ENCODE measurements at regions of chrX and their contacts with region 1.

Region 1: GRCh38 chrX:20252381-20253231 is 14.1 kb downstream of the RPS6KA3 start:
- DNase-seq: peak; percentile 46 to 84 (median 71)
- ATAC-seq: peak; percentile 77
- H3K4me3 ChIP-seq: no peak overlapping the region
- H3K4me3 Mint-ChIP-seq: no peak overlapping the region
- H3K27ac ChIP-seq: peak overlapping the region in 1 of 2 experiments; percentile 49
- H3K27ac Mint-ChIP-seq: peak overlapping the region; percentile 78
- H3K4me1 ChIP-seq: peaks cover 30% of the 10 kb centered on the region
- H3K4me1 Mint-ChIP-seq: peaks cover 61% of the 10 kb centered on the region
- H3K27me3 ChIP-seq: no peaks in the 10 kb centered on the region
- H3K27me3 Mint-ChIP-seq: no peaks in the 10 kb centered on the region
- CTCF ChIP-seq: peak; percentile 49

Region 2: GRCh38 chrX:19075754-19076153 is 1176.9 kb before region 1 on chrX:
- CTCF ChIA-PET with region 1: no interaction called
- POLR2A ChIA-PET with region 1: no interaction called
- intact Hi-C with region 1: no loop called
- DNase-seq: no peak
- ATAC-seq: no peak
- H3K4me3 ChIP-seq: no peak overlapping the region
- H3K4me3 Mint-ChIP-seq: no peak overlapping the region
- H3K27ac ChIP-seq: no peak overlapping the region
- H3K27ac Mint-ChIP-seq: no peak overlapping the region
- H3K4me1 ChIP-seq: no peaks in the 10 kb centered on the region
- H3K4me1 Mint-ChIP-seq: no peaks in the 10 kb centered on the region
- H3K27me3 ChIP-seq: no peaks in the 10 kb centered on the region
- H3K27me3 Mint-ChIP-seq: no peaks in the 10 kb centered on the region
- CTCF ChIP-seq: no peak

Region 3: DNA sequence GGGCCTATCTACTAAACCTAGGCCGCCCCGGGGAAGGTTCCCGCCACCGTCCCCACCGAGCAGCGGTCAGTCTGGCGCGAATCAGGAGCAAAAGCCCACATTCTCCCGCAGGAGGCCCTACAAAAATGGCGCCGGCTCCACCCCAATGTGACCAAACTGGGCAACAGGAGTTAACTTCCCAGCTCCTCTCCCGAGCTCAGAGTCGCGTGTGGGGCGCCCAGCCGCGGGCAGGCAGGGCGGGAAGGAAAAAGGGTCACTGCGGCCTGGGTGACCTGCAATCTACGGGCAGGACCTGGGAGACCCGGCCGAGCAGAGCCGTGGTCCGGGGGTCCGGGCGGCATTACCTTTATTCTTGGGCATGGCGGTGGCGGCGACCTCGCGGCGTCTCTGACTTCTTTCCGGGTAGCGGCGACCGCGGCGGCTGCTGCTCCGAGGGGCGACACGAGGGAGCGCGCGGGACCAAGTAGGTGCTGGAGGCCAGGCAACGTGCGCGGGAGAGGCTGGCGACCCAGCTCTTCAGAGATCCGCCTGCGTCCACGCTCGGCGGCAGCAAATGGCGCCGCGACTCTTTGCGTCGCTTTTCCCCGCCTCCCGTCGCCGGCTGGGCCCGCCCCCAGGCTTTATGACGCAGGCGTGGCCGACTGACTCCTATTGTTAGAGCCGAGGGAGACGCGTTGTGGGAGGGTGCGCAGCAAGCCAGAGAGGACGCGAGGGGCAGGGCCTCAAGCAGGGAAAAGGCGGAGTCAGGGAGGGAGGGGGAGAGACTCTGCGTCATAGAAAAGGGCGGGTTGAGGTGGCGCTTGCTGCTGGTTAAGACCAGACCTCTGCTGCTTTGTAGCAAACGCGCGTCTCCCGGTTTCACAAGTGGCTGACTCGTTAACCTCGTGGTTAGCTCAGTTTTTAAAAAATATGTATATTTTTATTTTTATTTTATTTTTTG is 111.1 kb before region 1 on chrX and contains the start of gene EIF1AX:
- CTCF ChIA-PET with region 1: no interaction called
- POLR2A ChIA-PET with region 1: no interaction called
- intact Hi-C with region 1: loop called in 1 of 2 experiments (anchors 5 kb)
- DNase-seq: peak; percentile 88 to 99 (median 96)
- ATAC-seq: peak; percentile 98
- H3K4me3 ChIP-seq: peak within 1 kb of the TSS; percentile 73 to 91
- H3K4me3 Mint-ChIP-seq: peak within 1 kb of the TSS; percentile 85
- H3K27ac ChIP-seq: peak within 1 kb of the TSS; percentile 79 to 84
- H3K27ac Mint-ChIP-seq: peak within 1 kb of the TSS; percentile 89
- H3K4me1 ChIP-seq: peaks cover 15% of the 10 kb centered on the region
- H3K4me1 Mint-ChIP-seq: peaks cover 26% of the 10 kb centered on the region
- H3K27me3 ChIP-seq: no peaks in the 10 kb centered on the region
- H3K27me3 Mint-ChIP-seq: no peaks in the 10 kb centered on the region
- CTCF ChIP-seq: no peak
- total RNA-seq, gene EIF1AX: 71.7 to 73.3 TPM

Region 4: GRCh38 chrX:20266810-20267606 is 14.4 kb after region 1 on chrX and contains the start of gene RPS6KA3:
- CTCF ChIA-PET with region 1: interaction called, 7 read pairs
- POLR2A ChIA-PET with region 1: interaction called, 4 read pairs
- intact Hi-C with region 1: loop called in 1 of 2 experiments (anchors 2 kb)
- DNase-seq: peak; percentile 79 to 94 (median 89)
- ATAC-seq: peak; percentile 83
- H3K4me3 ChIP-seq: peak within 1 kb of the TSS; percentile 70 to 85
- H3K4me3 Mint-ChIP-seq: peak within 1 kb of the TSS; percentile 96
- H3K27ac ChIP-seq: peak within 1 kb of the TSS; percentile 80 to 83
- H3K27ac Mint-ChIP-seq: peak within 1 kb of the TSS; percentile 97
- H3K4me1 ChIP-seq: peaks cover 14% of the 10 kb centered on the region
- H3K4me1 Mint-ChIP-seq: peaks cover 19% of the 10 kb centered on the region
- H3K27me3 ChIP-seq: no peaks in the 10 kb centered on the region
- H3K27me3 Mint-ChIP-seq: no peaks in the 10 kb centered on the region
- CTCF ChIP-seq: no peak
- total RNA-seq, gene RPS6KA3: 36.9 to 37.3 TPM

Region 5: GRCh38 chrX:20300822-20301221 is 48.2 kb after region 1 on chrX:
- CTCF ChIA-PET with region 1: no interaction called
- POLR2A ChIA-PET with region 1: no interaction called
- intact Hi-C with region 1: no loop called
- DNase-seq: no peak
- ATAC-seq: no peak
- H3K4me3 ChIP-seq: no peak overlapping the region
- H3K4me3 Mint-ChIP-seq: no peak overlapping the region
- H3K27ac ChIP-seq: no peak overlapping the region
- H3K27ac Mint-ChIP-seq: no peak overlapping the region
- H3K4me1 ChIP-seq: no peaks in the 10 kb centered on the region
- H3K4me1 Mint-ChIP-seq: peaks cover 6% of the 10 kb centered on the region
- H3K27me3 ChIP-seq: no peaks in the 10 kb centered on the region
- H3K27me3 Mint-ChIP-seq: no peaks in the 10 kb centered on the region
- CTCF ChIP-seq: no peak

Region 6: GRCh38 chrX:20325786-20326388 is 73.3 kb after region 1 on chrX:
- CTCF ChIA-PET with region 1: no interaction called
- POLR2A ChIA-PET with region 1: interaction called, 4 read pairs
- intact Hi-C with region 1: loop called in 1 of 2 experiments (anchors 5 kb)
- DNase-seq: no peak
- ATAC-seq: no peak
- H3K4me3 ChIP-seq: no peak overlapping the region
- H3K4me3 Mint-ChIP-seq: no peak overlapping the region
- H3K27ac ChIP-seq: no peak overlapping the region
- H3K27ac Mint-ChIP-seq: no peak overlapping the region
- H3K4me1 ChIP-seq: peaks cover 14% of the 10 kb centered on the region
- H3K4me1 Mint-ChIP-seq: peaks cover 14% of the 10 kb centered on the region
- H3K27me3 ChIP-seq: no peaks in the 10 kb centered on the region
- H3K27me3 Mint-ChIP-seq: no peaks in the 10 kb centered on the region
- CTCF ChIP-seq: no peak

Region 7: DNA sequence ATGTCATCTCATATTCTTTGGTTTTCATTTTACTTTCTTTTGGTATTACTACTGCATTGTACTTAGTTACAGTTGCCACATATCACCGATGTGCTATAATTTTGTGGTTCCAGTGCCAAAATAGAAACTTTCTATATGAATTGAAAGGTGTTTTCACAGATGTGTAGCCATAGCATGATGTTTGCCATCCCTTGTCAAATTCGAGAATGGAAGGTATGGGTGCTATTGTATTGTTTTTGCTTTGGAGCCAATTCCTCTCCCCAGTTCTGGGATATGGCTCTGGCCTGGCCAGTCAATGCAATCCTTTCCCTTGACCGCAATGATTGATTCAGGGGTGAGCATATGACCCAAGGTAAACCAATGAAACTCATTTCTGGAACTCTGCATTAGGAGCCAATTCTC is 100.3 kb after region 1 on chrX:
- CTCF ChIA-PET with region 1: no interaction called
- POLR2A ChIA-PET with region 1: no interaction called
- intact Hi-C with region 1: loop called in 1 of 2 experiments (anchors 10 kb)
- DNase-seq: no peak
- ATAC-seq: no peak
- H3K4me3 ChIP-seq: no peak overlapping the region
- H3K4me3 Mint-ChIP-seq: no peak overlapping the region
- H3K27ac ChIP-seq: no peak overlapping the region
- H3K27ac Mint-ChIP-seq: no peak overlapping the region
- H3K4me1 ChIP-seq: peaks cover 23% of the 10 kb centered on the region
- H3K4me1 Mint-ChIP-seq: peaks cover 22% of the 10 kb centered on the region
- H3K27me3 ChIP-seq: no peaks in the 10 kb centered on the region
- H3K27me3 Mint-ChIP-seq: no peaks in the 10 kb centered on the region
- CTCF ChIP-seq: no peak

Region 8: GRCh38 chrX:20442597-20442996 is 190.0 kb after region 1 on chrX:
- CTCF ChIA-PET with region 1: interaction called, 13 read pairs
- POLR2A ChIA-PET with region 1: interaction called, 7 read pairs
- intact Hi-C with region 1: loop called (anchors 1 kb)
- DNase-seq: peak; percentile 64 to 89 (median 87)
- ATAC-seq: peak; percentile 70
- H3K4me3 ChIP-seq: no peak overlapping the region
- H3K4me3 Mint-ChIP-seq: no peak overlapping the region
- H3K27ac ChIP-seq: no peak overlapping the region
- H3K27ac Mint-ChIP-seq: no peak overlapping the region
- H3K4me1 ChIP-seq: peaks cover 63% of the 10 kb centered on the region
- H3K4me1 Mint-ChIP-seq: peaks cover 58% of the 10 kb centered on the region
- H3K27me3 ChIP-seq: no peaks in the 10 kb centered on the region
- H3K27me3 Mint-ChIP-seq: no peaks in the 10 kb centered on the region
- CTCF ChIP-seq: peak; percentile 63